Activated naive CD4-positive, alpha-beta T cell treated with anti-CD3 and anti-CD28 coated beads for 36 hours (primary cell): ENCODE measurements at regions of chr5 and their contacts with region 1.

Region 1: DNA sequence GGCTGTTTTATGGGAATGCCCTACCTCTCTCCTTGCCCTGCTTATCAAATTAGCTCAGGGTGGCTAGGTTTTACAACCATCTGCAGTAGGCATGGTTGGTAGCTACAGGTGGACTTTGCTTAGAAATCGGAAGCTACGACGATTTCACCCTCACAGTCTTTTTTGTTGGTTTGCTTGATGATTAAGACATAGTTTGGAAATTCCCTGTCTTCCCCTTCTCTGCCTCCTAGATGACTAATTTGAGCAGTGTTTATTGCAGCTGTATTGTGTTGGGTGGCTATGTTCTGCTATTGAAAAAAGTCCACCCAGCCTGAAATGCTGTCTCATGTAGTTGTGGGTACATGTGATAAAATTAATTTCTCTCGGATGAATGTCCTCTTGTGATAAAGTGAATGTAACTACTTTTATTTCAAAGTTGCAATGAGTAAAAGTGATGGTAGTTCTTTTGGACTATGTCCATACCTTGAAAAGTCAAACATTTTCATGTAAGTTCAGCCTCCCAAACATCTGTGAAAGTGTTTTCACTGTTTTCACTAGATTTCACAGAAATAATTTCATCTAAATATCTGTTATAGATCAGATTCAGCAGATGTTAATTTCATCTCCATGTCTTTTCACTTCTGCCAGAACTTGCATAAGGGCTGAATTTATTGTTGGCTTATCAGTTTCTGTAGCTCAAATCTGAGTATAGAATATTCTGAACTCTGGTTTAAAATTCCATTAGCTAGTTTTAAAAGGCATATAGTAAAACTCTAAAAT is 37.3 kb upstream of the FYB1 start:
- DNase-seq: peak; percentile 20
- H3K4me3 Mint-ChIP-seq: no peak overlapping the region
- H3K27ac Mint-ChIP-seq: no peak overlapping the region
- H3K4me1 Mint-ChIP-seq: peaks cover 16% of the 10 kb centered on the region
- H3K27me3 Mint-ChIP-seq: no peaks in the 10 kb centered on the region

Region 2: DNA sequence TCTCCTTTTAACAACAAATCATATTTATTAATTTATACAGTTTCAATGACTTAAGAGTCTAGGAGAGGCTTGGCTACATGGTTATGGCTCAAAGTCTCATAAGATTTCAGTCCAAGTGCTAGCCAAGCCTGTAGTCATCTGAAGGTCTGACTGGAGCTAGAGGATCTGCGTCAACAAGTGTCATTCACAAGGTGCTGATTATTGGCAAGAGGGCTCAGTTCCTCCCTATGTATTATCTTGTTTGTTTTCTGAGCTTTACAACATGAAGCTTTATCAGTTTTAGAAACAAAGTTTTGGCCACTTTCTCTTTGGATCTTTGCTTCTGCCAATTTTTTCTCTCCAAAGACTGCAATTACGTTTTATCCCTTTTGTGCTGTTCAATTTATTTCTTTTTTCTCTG is 277.1 kb before region 1 on chr5:
- CTCF ChIA-PET with region 1: no interaction called
- intact Hi-C with region 1: no loop called
- DNase-seq: no peak
- H3K4me3 Mint-ChIP-seq: no peak overlapping the region
- H3K27ac Mint-ChIP-seq: no peak overlapping the region
- H3K4me1 Mint-ChIP-seq: peaks cover 2% of the 10 kb centered on the region
- H3K27me3 Mint-ChIP-seq: no peaks in the 10 kb centered on the region

Region 3: DNA sequence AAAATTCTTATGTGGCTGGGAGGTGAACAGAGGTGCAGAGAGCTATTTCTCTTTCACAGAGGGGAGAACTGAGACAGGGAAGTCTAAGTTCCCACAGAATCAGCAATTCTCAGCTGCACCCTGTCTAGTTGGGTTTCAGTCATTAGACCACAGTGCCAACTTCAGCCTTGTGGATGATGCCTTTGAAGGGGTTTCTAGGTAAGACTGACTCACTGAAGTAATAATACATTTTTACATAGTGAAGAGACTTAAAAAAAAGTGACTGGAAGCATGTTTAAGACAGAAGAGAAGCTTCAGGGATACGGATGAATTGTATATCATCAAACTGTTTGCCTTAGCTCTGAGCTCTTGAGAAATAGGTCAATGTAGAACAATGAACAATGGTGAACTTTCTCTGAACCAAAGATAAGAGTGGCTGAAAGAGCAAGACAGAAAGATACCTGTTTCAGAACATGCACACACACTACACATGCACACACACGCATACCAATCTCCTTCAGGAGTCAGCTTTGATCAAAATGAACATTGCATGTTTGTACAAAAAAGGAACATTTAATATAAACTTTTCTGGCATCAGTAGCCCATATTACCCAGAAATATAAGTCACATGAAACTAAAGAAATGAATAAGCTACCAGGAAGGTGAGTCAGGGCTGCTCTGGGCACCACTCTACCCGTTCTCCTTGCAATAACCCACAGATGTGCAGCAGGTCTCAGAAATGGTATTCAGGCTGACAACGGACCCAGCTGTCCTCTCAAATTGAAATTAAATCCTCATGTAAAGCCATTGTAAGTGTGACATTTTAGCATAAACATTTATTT is 24.7 kb before region 1 on chr5:
- CTCF ChIA-PET with region 1: interaction called, 3 read pairs
- intact Hi-C with region 1: loop called (anchors 1 kb)
- DNase-seq: peak; percentile 72
- H3K4me3 Mint-ChIP-seq: peak overlapping the region; percentile 52
- H3K27ac Mint-ChIP-seq: peak overlapping the region; percentile 90
- H3K4me1 Mint-ChIP-seq: peaks cover 14% of the 10 kb centered on the region
- H3K27me3 Mint-ChIP-seq: no peaks in the 10 kb centered on the region